ENCODE measurements at regions of chr6 and their contacts with region 1.

Region 1: DNA sequence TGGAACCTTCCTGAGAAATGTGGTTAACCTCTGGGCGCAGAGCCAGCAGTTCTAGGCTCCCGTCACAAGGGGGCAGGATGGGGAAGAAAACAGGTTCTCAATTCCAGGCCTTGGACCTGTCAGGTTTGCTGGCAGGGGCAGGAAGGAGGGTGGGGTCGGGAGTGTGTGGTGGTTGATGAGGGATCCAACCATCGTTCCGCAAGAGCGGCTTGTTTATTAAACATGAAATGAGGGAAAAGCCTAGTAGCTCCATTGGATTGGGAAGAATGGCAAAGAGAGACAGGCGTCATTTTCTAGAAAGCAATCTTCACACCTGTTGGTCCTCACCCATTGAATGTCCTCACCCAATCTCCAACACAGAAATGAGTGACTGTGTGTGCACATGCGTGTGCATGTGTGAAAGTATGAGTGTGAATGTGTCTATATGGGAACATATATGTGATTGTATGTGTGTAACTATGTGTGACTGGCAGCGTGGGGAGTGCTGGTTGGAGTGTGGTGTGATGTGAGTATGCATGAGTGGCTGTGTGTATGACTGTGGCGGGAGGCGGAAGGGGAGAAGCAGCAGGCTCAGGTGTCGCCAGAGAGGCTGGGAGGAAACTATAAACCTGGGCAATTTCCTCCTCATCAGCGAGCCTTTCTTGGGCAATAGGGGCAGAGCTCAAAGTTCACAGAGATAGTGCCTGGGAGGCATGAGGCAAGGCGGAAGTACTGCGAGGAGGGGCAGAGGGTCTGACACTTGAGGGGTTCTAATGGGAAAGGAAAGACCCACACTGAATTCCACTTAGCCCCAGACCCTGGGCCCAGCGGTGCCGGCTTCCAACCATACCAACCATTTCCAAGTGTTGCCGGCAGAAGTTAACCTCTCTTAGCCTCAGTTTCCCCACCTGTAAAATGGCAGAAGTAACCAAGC is 29.6 kb downstream of the SRSF3 start:
- DNase-seq: peak; percentile 88 to 90
- H3K4me3 ChIP-seq: no peak overlapping the region
- H3K27ac ChIP-seq: no peak overlapping the region
- H3K4me1 ChIP-seq: peaks cover 0 to 3% of the 10 kb centered on the region in 2 donors
- H3K27me3 ChIP-seq: no peaks in the 10 kb centered on the region
- CTCF ChIP-seq: peak; percentile 90 to 92 (median 91)
- POLR2A ChIP-seq: no peak

Region 2: GRCh38 chr6:36546920-36547645 is 76.7 kb before region 1 on chr6 and contains the start of gene STK38:
- intact Hi-C with region 1: no loop called
- DNase-seq: peak; percentile 87 to 91
- H3K4me3 ChIP-seq: peak within 1 kb of the TSS; percentile 92 to 98 (median 95)
- H3K27ac ChIP-seq: peak within 1 kb of the TSS; percentile 98
- H3K4me1 ChIP-seq: peaks cover 0 to 16% of the 10 kb centered on the region in 2 donors
- H3K27me3 ChIP-seq: no peaks in the 10 kb centered on the region
- CTCF ChIP-seq: no peak
- POLR2A ChIP-seq: peak; percentile 97
- total RNA-seq, gene STK38: 27.5 to 39.4 (median 31.4) TPM

Region 3: DNA sequence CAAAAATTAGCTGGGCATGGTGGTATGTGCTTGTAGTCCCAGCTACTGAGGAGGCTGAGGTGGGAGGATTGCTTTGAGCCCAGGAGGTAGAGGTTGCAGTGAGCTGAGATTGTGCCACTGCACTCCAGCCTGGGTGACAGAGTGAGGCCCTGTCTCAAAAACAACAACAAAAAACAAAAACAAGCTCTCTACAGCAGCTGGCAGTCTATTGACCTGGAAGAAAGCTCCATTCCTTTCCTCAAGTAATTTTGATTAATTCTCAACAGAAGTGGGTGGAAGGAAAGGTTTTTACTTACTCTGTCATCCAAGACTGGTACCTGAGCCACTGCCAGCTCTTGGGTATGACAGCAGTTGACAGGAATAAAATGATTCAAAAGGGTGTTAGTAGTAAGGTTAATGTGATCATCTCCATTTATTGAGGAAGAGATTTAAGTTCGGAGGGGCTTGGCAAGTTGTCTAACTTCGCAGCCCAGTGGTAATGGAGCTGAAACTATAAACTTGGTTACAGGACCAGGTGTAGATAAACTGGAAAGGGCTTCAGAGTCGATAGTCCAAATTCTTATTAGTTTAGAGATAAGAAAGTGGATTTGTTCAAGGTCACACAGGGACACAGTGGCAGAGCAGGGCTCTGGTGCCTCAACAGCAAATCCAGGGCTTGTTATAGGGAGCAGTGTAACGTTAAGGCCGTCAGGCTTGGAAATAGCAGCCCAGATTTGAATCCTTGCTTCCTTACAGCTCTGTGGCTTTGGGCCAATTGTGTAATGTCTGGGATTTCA is 14.8 kb before region 1 on chr6:
- intact Hi-C with region 1: no loop called
- DNase-seq: no peak
- H3K4me3 ChIP-seq: no peak overlapping the region
- H3K27ac ChIP-seq: peak overlapping the region; percentile 0 to 50
- H3K4me1 ChIP-seq: peaks cover 2 to 4% of the 10 kb centered on the region in 2 donors
- H3K27me3 ChIP-seq: no peaks in the 10 kb centered on the region
- CTCF ChIP-seq: no peak
- POLR2A ChIP-seq: no peak

Region 4: GRCh38 chr6:36682328-36683144 is 58.7 kb after region 1 on chr6:
- intact Hi-C with region 1: loop called (anchors 5 kb)
- DNase-seq: peak; percentile 80 to 87
- H3K4me3 ChIP-seq: peak overlapping the region in 2 of 3 donors; percentile 13 to 49
- H3K27ac ChIP-seq: peak overlapping the region; percentile 82
- H3K4me1 ChIP-seq: peaks cover 11 to 17% of the 10 kb centered on the region in 2 donors
- H3K27me3 ChIP-seq: no peaks in the 10 kb centered on the region
- CTCF ChIP-seq: no peak
- POLR2A ChIP-seq: no peak